Motor neuron (in vitro differentiated cells): ENCODE measurements at regions of chr12 and their contacts with region 1.

Region 1: GRCh38 chr12:98998697-98999299 is 353.7 kb downstream of the APAF1 start:
- ATAC-seq: peak; percentile 49 to 97 (median 74)
- H3K4me3 ChIP-seq: no peak overlapping the region
- H3K27ac ChIP-seq: no peak overlapping the region
- H3K4me1 ChIP-seq: peaks cover 0 to 3% of the 10 kb centered on the region in 2 donors

Region 2: DNA sequence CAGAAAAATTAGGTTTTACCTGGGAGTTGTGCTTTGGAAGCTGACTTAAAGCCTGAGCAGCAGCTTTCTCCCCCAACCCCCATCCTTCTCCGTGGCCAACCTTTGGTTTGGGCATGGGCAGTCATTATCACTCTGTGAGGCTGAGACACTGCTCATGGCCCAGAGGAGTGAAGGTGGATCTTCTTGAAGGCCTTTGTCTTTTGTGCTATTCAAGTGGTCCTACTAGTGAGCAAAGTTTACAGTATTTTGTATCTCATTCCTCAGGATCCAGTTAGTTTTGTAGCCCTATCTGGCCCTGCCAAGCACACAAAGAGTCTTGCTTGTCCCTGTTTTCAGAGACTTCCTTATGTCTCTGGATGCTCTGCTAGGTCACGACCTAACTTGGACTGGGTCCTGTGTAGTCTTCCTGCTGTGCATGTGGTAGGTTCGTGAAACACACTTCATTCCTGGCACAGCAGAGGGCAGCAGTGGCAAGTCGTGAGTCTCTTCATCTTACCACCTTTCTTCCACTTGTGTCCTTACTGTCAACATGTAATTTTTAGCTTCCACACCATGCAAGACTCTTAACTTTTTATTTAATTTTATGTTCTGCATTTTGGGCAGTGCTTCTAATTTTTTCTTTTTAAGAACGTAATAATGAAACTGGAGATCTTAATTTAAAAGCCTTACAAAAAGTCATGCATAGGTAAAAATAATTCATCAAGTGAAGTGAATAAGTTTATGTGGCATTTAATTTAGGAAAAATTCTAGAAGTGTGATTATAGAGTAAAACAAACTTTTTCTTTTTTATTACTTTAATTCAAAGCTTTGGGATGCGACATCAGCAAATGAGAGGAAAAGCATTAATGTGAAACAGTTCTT is 300.0 kb before region 1 on chr12:
- in situ Hi-C with region 1: loop called in 2 of 9 experiments (anchors 25 kb)
- ATAC-seq: peak in 6 of 8 experiments; percentile 55 to 98 (median 86)
- H3K4me3 ChIP-seq: no peak overlapping the region
- H3K27ac ChIP-seq: no peak overlapping the region
- H3K4me1 ChIP-seq: no peaks in the 10 kb centered on the region

Region 3: DNA sequence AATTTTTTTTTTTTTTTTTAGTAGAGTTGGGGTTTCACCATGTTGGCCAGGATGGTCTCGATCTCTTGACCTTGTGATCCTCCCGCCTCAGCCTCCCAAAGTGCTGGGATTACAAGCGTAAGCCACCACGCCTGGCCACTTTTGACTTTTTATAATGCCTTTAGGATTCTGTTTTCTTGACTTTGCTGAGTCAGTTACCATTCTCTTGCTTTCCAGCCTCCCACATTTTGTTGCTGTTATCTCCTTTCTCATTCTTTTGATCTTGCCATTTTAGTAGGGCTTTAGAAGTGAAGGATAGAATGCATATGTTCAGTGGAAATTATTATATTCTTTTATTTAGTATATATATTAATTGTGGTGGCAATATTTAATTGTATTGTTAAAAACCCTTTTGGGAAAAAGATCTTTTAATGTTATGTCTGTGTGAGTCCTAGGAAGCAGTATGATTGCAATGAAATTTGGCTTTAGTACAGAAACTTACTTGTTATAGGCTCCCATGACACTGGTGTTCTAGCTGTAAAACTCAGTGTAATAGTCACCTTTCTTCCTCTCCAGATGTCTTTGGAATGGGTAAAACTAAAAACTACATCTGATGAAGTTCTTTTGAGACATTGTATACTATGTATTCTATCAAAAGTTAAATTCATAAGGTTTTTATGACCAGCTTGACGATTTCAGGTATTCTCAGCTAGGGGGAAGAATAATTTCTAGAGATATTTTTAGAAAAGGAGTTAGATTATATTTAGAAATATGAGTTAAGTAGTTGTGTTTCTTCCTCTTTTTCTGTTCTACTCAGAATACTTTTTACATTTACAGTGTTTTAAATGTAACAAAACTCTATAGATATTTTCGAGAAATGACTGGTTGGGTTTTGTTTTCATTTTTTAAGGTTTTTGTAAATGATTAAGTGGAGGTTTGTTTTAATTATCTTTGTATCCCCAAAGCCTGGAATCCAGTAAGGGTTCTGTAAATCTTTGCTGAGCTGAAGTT is 279.0 kb before region 1 on chr12:
- in situ Hi-C with region 1: loop called in 2 of 9 experiments (anchors 25 kb)
- ATAC-seq: no peak
- H3K4me3 ChIP-seq: no peak overlapping the region
- H3K27ac ChIP-seq: no peak overlapping the region
- H3K4me1 ChIP-seq: no peaks in the 10 kb centered on the region

Region 4: GRCh38 chr12:98725476-98726247 is 273.1 kb before region 1 on chr12:
- in situ Hi-C with region 1: loop called in 2 of 9 experiments (anchors 25 kb)
- ATAC-seq: peak; percentile 59 to 98 (median 94)
- H3K4me3 ChIP-seq: no peak overlapping the region
- H3K27ac ChIP-seq: no peak overlapping the region
- H3K4me1 ChIP-seq: no peaks in the 10 kb centered on the region